ENCODE measurements at regions of chr16 and their contacts with region 1.

Region 1: DNA sequence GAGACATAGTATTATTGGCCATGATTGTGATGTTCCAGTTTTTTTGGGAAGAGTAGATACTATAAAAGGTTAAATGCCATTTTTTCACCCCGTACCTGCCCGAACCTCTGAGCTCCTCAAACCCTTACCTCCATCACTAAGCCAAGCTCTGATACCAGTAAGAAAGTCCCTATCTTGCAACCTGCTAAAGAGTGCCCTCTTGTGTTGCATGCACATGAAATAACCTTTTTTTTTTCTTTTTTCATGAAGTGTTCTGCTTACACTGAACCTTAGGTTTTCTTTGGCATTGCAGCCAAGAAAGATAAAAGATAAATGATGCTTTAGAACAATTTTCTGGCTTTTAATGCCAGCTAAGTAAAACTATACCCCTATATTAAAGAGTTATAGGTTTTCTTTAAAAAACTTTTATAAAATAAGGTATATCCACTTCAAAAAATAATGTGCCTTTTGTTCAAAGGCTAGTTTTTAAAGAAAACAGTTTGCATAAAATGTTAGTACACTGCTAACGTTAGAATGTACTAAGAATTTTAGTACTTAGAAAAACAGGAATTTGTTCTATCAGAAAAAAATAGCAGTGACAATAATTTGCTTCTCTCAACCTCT is 295.3 kb upstream of the PMFBP1 start:
- DNase-seq: peak; percentile 39

Region 2: DNA sequence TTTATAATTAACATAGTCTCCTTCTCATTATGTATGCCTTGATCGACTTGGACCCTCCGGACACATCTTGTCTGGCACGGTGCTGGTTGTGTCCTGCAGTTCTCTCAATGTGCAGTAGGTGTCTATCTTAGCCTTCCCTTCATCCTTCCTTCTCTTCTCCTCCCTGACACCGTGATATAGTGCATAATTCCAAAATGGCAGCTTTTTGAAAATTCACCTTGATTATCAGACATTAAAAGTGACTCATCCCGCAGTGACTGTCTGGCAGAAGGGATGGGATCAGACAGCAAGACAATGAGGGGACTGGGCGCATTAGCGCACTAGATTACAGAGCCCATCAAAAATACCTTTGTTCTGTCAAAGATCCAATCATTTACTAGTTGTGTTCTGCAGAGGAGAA is 225.3 kb before region 1 on chr16:
- in situ Hi-C with region 1: loop called (anchors 25 kb)
- DNase-seq: peak; percentile 55

Measured in Caki2 (cell line).